T-cell (primary cell): ENCODE measurements at regions of chr1 and their contacts with region 1.

Region 1: DNA sequence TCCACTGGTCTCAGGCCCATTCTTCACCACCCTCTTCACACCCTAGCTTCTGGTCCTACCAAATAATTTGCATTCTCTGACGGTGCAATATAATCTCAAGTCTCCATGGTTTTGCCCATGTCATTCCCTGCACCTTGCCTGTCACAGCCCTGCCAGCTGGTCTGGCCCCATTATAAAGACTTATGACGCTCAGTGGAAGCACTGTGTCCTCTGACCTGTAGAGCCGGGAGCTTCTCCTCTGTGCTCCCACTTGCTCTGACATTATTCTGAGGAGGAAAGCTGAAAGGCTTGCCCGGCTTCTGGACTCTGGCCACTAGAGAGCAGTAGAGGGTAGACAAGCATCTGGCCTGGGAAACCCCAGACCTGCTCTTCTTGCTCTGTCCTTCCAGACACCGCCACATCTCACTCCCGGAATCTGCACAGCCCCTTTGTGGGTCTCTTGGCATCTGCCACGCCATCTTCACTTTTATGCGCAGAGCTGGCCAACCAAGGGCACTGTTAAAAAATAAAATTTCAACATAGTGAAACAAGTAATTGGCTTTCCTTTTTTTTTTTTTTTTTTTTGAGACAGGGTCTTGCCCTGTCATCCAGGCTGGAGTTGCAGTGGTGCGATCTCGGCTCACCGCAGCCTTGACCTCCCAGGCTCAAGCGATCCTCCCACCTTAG is 44.4 kb downstream of the NENF start:
- DNase-seq: peak; percentile 39 to 87 (median 64)
- ATAC-seq: peak; percentile 86 to 97 (median 88)
- H3K4me3 ChIP-seq: no peak overlapping the region
- H3K4me3 Mint-ChIP-seq: no peak overlapping the region
- H3K27ac ChIP-seq: no peak overlapping the region
- H3K27ac Mint-ChIP-seq: no peak overlapping the region
- H3K4me1 ChIP-seq: peaks cover 0 to 17% of the 10 kb centered on the region in 2 experiments
- H3K4me1 Mint-ChIP-seq: peaks cover 6 to 14% (median 9%) of the 10 kb centered on the region in 3 donors
- H3K27me3 ChIP-seq: peaks cover 0 to 12% of the 10 kb centered on the region in 2 experiments
- H3K27me3 Mint-ChIP-seq: peaks cover 6 to 19% of the 10 kb centered on the region in 2 donors

Region 2: GRCh38 chr1:211145944-211146343 is 1331.2 kb before region 1 on chr1:
- CTCF ChIA-PET with region 1: no interaction called
- POLR2A ChIA-PET with region 1: no interaction called
- DNase-seq: no peak
- ATAC-seq: no peak
- H3K4me3 ChIP-seq: no peak overlapping the region
- H3K4me3 Mint-ChIP-seq: no peak overlapping the region
- H3K27ac ChIP-seq: no peak overlapping the region
- H3K27ac Mint-ChIP-seq: no peak overlapping the region
- H3K4me1 ChIP-seq: no peaks in the 10 kb centered on the region
- H3K4me1 Mint-ChIP-seq: no peaks in the 10 kb centered on the region
- H3K27me3 ChIP-seq: peaks cover 2 to 3% of the 10 kb centered on the region in 2 experiments
- H3K27me3 Mint-ChIP-seq: peaks cover 37 to 38% of the 10 kb centered on the region in 2 donors

Region 3: DNA sequence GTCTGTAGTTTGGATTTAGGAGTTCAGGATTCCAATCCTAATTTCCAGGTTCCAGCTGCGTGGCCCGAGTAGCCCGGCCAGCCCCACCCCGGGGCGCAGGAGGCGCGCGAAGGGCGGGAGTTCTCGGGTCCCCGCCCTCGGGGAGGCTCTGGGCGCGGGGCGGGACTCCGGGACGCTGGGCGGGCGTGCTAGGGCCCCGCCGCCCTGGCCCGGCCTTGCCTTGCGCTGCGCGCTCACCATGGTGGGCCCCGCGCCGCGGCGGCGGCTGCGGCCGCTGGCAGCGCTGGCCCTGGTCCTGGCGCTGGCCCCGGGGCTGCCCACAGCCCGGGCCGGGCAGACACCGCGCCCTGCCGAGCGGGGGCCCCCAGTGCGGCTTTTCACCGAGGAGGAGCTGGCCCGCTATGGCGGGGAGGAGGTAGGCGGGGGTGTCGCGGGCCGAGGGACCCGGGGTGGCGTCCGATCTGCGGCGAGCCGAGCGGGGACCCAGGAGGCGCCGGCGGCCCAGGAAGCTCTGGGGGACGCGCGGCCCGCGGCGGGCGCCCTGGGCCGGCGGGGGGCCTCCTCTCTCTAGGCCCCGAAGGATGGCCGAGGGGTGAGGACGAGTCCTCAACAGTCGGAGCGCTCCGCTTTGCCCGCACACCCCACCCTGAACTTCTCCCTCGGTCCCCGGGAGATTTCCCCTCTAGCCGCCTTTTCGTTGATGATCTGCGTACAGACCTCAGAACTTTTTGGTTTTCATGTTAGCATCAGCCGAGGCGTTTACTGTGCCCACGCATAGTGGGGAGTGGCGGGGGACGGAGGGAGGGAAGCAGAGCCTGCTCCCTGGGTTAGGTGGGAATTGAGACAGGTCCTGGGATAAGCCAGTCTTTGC is 44.2 kb before region 1 on chr1 and contains the start of gene NENF:
- CTCF ChIA-PET with region 1: no interaction called
- POLR2A ChIA-PET with region 1: no interaction called
- DNase-seq: peak; percentile 28 to 81 (median 65)
- ATAC-seq: peak; percentile 99 to 100 (median 100)
- H3K4me3 ChIP-seq: peak within 1 kb of the TSS; percentile 52 to 59
- H3K4me3 Mint-ChIP-seq: peak within 1 kb of the TSS; percentile 68 to 79 (median 75)
- H3K27ac ChIP-seq: no peak within 1 kb of the TSS
- H3K27ac Mint-ChIP-seq: peak within 1 kb of the TSS in 1 of 2 donors; percentile 77
- H3K4me1 ChIP-seq: peaks cover 2 to 19% of the 10 kb centered on the region in 2 experiments
- H3K4me1 Mint-ChIP-seq: peaks cover 28 to 40% (median 36%) of the 10 kb centered on the region in 3 donors
- H3K27me3 ChIP-seq: no peaks in the 10 kb centered on the region
- H3K27me3 Mint-ChIP-seq: no peaks in the 10 kb centered on the region
- total RNA-seq, gene NENF: 17.4 to 29.3 (median 25.9) TPM

Region 4: GRCh38 chr1:212587016-212587887 is 110.1 kb after region 1 on chr1:
- CTCF ChIA-PET with region 1: no interaction called
- POLR2A ChIA-PET with region 1: no interaction called
- DNase-seq: no peak
- ATAC-seq: no peak
- H3K4me3 ChIP-seq: no peak overlapping the region
- H3K4me3 Mint-ChIP-seq: no peak overlapping the region
- H3K27ac ChIP-seq: no peak overlapping the region
- H3K27ac Mint-ChIP-seq: peak overlapping the region in 1 of 2 donors; percentile 42
- H3K4me1 ChIP-seq: no peaks in the 10 kb centered on the region
- H3K4me1 Mint-ChIP-seq: no peaks in the 10 kb centered on the region
- H3K27me3 ChIP-seq: peaks cover 0 to 37% of the 10 kb centered on the region in 2 experiments
- H3K27me3 Mint-ChIP-seq: peaks cover 54% of the 10 kb centered on the region in 2 donors

Region 5: DNA sequence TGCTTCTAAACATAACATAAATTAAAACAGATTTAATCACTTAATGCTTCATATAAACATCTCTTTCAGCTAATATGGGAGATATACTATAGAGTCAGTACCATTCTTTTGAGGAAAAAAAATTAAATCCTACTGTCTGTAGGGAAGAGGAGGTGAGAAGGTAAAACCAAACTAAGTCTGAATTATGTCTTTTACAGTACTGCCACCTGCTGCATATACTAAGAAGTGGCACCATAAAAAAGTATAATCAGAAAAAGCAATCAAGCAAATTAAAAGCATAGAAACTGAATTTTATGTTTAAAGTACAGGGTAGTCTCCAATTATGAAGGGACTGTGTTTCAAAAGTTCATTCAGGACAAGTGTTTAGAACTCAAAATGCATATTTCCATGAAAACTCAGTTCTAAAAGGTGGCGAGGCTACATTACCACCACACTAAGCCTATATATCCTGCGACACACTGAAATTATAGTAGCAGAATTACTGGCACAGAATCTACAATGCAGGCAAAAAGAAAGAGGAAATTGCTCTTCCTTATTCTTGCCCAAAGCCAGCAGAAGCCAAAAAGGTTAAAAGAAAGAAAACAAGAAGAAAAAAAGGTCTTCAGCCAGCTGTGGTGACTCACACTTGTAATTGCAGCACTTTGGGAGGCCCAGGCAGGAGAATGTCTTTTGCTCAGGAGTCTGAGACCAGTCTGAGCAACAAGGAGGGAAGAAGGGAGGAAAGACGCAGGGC is 305.4 kb after region 1 on chr1:
- CTCF ChIA-PET with region 1: interaction called, 5 to 13 read pairs
- POLR2A ChIA-PET with region 1: no interaction called
- DNase-seq: peak in 1 of 35 experiments; percentile 55
- ATAC-seq: peak in 3 of 4 experiments; percentile 58 to 62 (median 58)
- H3K4me3 ChIP-seq: no peak overlapping the region
- H3K4me3 Mint-ChIP-seq: no peak overlapping the region
- H3K27ac ChIP-seq: no peak overlapping the region
- H3K27ac Mint-ChIP-seq: no peak overlapping the region
- H3K4me1 ChIP-seq: no peaks in the 10 kb centered on the region
- H3K4me1 Mint-ChIP-seq: peaks cover 0 to 10% (median 8%) of the 10 kb centered on the region in 3 donors
- H3K27me3 ChIP-seq: no peaks in the 10 kb centered on the region
- H3K27me3 Mint-ChIP-seq: no peaks in the 10 kb centered on the region